CD4-positive, alpha-beta T cell (primary cell): ENCODE measurements at regions of chr1 and their contacts with region 1.

Region 1: DNA sequence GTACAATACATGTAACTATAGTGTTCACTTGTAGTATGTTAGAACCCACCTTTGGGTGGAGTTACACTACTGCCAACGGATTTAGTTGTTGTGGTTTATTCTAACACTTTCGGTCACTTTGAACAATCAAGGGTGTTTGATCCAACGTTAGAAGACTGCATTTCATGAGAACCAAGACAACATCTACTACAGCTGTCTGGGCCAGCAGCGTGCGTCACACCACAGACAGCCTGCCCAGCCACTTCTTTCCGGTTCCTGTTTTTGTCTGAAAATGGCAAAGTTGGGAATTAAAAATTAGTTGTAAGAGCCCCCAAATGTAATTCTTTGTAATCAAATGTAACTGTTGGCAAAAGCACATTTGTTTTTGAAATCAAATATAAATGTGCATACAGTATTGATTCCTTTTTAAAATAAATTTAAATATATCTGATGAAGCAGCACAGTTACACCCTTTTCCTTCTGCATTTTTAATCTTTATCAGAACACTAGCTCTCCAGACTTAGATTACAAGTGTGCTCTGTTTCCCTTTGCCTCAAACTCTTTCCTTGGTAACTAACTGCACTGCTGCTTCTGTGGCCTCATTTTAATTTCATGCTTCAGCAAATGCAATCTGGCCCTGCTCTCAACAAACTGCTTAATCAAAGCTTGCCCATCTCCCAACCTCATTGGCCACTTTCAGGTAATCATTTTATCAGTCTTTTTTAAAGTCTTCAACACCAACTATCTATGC is 86.6 kb upstream of the DPH5 start:
- DNase-seq: peak; percentile 59 to 95 (median 72)
- ATAC-seq: peak; percentile 87
- H3K4me3 ChIP-seq: no peak overlapping the region
- H3K4me3 Mint-ChIP-seq: peak overlapping the region; percentile 73
- H3K27ac ChIP-seq: peak overlapping the region; percentile 58 to 81
- H3K27ac Mint-ChIP-seq: peak overlapping the region; percentile 94
- H3K4me1 ChIP-seq: peaks cover 23% of the 10 kb centered on the region
- H3K4me1 Mint-ChIP-seq: peaks cover 61% of the 10 kb centered on the region
- H3K27me3 ChIP-seq: no peaks in the 10 kb centered on the region
- H3K27me3 Mint-ChIP-seq: no peaks in the 10 kb centered on the region
- CTCF ChIP-seq: no peak

Region 2: GRCh38 chr1:100734676-100735075 is 377.5 kb before region 1 on chr1:
- CTCF ChIA-PET with region 1: no interaction called
- POLR2A ChIA-PET with region 1: no interaction called
- intact Hi-C with region 1: no loop called
- DNase-seq: no peak
- ATAC-seq: no peak
- H3K4me3 ChIP-seq: no peak overlapping the region
- H3K4me3 Mint-ChIP-seq: no peak overlapping the region
- H3K27ac ChIP-seq: no peak overlapping the region
- H3K27ac Mint-ChIP-seq: no peak overlapping the region
- H3K4me1 ChIP-seq: no peaks in the 10 kb centered on the region
- H3K4me1 Mint-ChIP-seq: no peaks in the 10 kb centered on the region
- H3K27me3 ChIP-seq: no peaks in the 10 kb centered on the region
- H3K27me3 Mint-ChIP-seq: peaks cover 6% of the 10 kb centered on the region
- CTCF ChIP-seq: no peak

Region 3: GRCh38 chr1:100928128-100928527 is 184.1 kb before region 1 on chr1:
- CTCF ChIA-PET with region 1: no interaction called
- POLR2A ChIA-PET with region 1: interaction called, 9 read pairs
- intact Hi-C with region 1: loop called in 1 of 2 experiments (anchors 2 kb)
- DNase-seq: peak in 4 of 14 experiments; percentile 36 to 64 (median 53)
- ATAC-seq: no peak
- H3K4me3 ChIP-seq: peak overlapping the region; percentile 28
- H3K4me3 Mint-ChIP-seq: no peak overlapping the region
- H3K27ac ChIP-seq: peak overlapping the region; percentile 72 to 77
- H3K27ac Mint-ChIP-seq: no peak overlapping the region
- H3K4me1 ChIP-seq: peaks cover 46% of the 10 kb centered on the region
- H3K4me1 Mint-ChIP-seq: peaks cover 41% of the 10 kb centered on the region
- H3K27me3 ChIP-seq: no peaks in the 10 kb centered on the region
- H3K27me3 Mint-ChIP-seq: no peaks in the 10 kb centered on the region
- CTCF ChIP-seq: no peak

Region 4: GRCh38 chr1:101065575-101065974 is 46.6 kb before region 1 on chr1:
- CTCF ChIA-PET with region 1: no interaction called
- POLR2A ChIA-PET with region 1: no interaction called
- intact Hi-C with region 1: loop called in 1 of 2 experiments (anchors 5 kb)
- DNase-seq: peak in 2 of 14 experiments; percentile 13 to 30
- ATAC-seq: peak; percentile 58
- H3K4me3 ChIP-seq: no peak overlapping the region
- H3K4me3 Mint-ChIP-seq: peak overlapping the region; percentile 78
- H3K27ac ChIP-seq: no peak overlapping the region
- H3K27ac Mint-ChIP-seq: peak overlapping the region; percentile 79
- H3K4me1 ChIP-seq: peaks cover 22% of the 10 kb centered on the region
- H3K4me1 Mint-ChIP-seq: peaks cover 66% of the 10 kb centered on the region
- H3K27me3 ChIP-seq: no peaks in the 10 kb centered on the region
- H3K27me3 Mint-ChIP-seq: no peaks in the 10 kb centered on the region
- CTCF ChIP-seq: no peak

Region 5: DNA sequence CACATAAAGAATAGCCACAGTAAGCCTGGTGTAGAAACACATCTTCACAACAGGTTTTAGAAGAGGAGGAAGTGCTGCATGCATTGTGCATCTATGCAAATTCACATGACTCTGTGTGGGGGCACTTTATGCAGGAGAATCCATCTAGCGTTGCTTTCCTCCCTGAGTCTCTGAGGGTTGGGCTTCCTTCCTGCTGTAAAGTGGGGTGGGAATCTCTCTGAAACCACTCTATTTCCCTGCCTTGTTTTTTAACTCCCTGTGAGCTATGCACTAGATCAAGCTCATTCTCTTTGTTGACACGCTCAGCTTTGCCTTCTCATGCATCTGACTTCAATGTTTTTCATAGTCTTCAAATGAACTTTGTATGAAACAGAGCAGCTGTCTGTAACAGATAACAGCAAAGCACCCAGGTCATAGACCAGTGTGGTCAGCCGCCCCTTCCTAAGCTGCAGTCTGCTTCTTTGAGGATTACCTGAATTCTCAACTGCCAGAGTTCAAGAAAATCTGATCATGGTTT is 16.1 kb after region 1 on chr1:
- CTCF ChIA-PET with region 1: interaction called, 3 read pairs
- POLR2A ChIA-PET with region 1: interaction called, 10 read pairs
- intact Hi-C with region 1: loop called in 1 of 2 experiments (anchors 1 kb)
- DNase-seq: peak in 13 of 14 experiments; percentile 5 to 64 (median 37)
- ATAC-seq: peak; percentile 71
- H3K4me3 ChIP-seq: no peak overlapping the region
- H3K4me3 Mint-ChIP-seq: peak overlapping the region; percentile 75
- H3K27ac ChIP-seq: peak overlapping the region; percentile 33 to 66
- H3K27ac Mint-ChIP-seq: peak overlapping the region; percentile 83
- H3K4me1 ChIP-seq: peaks cover 33% of the 10 kb centered on the region
- H3K4me1 Mint-ChIP-seq: peaks cover 73% of the 10 kb centered on the region
- H3K27me3 ChIP-seq: no peaks in the 10 kb centered on the region
- H3K27me3 Mint-ChIP-seq: no peaks in the 10 kb centered on the region
- CTCF ChIP-seq: no peak

Region 6: DNA sequence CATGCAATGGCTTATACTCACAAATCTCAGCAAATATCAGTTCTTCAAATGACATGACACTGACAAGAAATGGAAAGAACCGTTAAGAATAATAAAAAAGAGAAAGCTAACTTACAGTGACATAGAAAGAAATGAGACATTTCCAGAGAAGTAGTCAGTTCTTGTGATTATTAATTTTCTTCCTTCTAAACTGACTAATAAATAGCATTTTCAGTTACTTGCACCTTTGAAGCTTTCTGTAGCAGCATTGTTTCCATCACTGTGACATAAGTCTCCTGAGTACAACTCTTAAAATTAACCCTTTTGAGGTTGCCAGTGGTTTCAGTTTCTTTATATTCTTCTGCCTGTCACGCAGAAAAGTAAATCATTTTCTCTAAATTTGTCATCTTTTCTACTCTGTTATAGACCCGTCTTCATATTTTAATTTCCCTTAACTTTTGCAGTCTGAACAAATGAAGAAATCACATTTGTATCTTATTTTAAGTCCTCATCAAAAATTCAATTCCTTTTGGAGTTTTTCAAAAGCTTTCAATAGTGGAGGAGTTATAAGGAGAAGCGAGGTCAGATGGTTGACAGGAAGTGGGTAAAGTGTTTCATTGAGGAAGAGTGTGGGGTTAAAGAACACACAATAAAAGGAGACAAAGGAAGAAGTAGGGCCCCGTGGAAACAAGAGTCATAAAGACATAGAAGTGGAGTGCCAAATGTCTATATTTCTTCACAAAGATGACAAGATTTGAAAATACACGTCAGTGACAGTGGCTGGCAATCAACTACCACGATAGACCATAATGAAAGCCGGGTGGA is 66.7 kb after region 1 on chr1:
- CTCF ChIA-PET with region 1: interaction called, 3 read pairs
- POLR2A ChIA-PET with region 1: interaction called, 4 read pairs
- intact Hi-C with region 1: loop called in 1 of 2 experiments (anchors 2 kb)
- DNase-seq: peak in 4 of 14 experiments; percentile 17 to 74 (median 46)
- ATAC-seq: peak; percentile 78
- H3K4me3 ChIP-seq: peak overlapping the region; percentile 20
- H3K4me3 Mint-ChIP-seq: peak overlapping the region; percentile 70
- H3K27ac ChIP-seq: peak overlapping the region; percentile 34 to 38
- H3K27ac Mint-ChIP-seq: peak overlapping the region; percentile 86
- H3K4me1 ChIP-seq: peaks cover 10% of the 10 kb centered on the region
- H3K4me1 Mint-ChIP-seq: peaks cover 41% of the 10 kb centered on the region
- H3K27me3 ChIP-seq: no peaks in the 10 kb centered on the region
- H3K27me3 Mint-ChIP-seq: no peaks in the 10 kb centered on the region
- CTCF ChIP-seq: no peak

Region 7: DNA sequence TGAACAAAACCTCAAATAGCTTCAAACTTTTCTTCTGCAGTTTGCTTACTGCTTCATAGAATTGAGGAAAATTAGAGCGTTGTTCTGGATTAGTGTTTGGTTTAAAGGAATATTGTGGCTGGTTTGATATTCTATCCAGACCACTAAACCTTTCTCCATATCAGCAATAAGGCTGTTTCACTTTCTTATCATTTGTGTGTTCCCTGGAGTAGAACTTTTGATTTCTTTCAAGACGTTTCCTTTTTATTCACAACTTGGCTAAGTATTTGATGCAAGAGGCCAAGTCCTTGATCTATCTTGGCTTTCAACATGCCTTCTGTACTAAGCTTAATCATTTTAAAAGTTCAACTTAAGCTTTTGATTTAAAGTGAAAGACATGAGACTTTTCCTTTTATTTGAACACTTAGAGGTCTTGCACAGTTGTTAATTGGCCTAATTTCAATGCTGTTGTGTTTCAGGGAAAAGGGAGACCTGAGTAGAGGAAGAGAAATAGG is 483.7 kb after region 1 on chr1:
- CTCF ChIA-PET with region 1: no interaction called
- POLR2A ChIA-PET with region 1: no interaction called
- intact Hi-C with region 1: no loop called
- DNase-seq: no peak
- ATAC-seq: no peak
- H3K4me3 ChIP-seq: no peak overlapping the region
- H3K4me3 Mint-ChIP-seq: no peak overlapping the region
- H3K27ac ChIP-seq: no peak overlapping the region
- H3K27ac Mint-ChIP-seq: no peak overlapping the region
- H3K4me1 ChIP-seq: no peaks in the 10 kb centered on the region
- H3K4me1 Mint-ChIP-seq: no peaks in the 10 kb centered on the region
- H3K27me3 ChIP-seq: no peaks in the 10 kb centered on the region
- H3K27me3 Mint-ChIP-seq: peaks cover 10% of the 10 kb centered on the region
- CTCF ChIP-seq: no peak